Esophagus muscularis mucosa (tissue), 4 donors: ENCODE measurements at regions of chr7 and their contacts with region 1.

Region 1: DNA sequence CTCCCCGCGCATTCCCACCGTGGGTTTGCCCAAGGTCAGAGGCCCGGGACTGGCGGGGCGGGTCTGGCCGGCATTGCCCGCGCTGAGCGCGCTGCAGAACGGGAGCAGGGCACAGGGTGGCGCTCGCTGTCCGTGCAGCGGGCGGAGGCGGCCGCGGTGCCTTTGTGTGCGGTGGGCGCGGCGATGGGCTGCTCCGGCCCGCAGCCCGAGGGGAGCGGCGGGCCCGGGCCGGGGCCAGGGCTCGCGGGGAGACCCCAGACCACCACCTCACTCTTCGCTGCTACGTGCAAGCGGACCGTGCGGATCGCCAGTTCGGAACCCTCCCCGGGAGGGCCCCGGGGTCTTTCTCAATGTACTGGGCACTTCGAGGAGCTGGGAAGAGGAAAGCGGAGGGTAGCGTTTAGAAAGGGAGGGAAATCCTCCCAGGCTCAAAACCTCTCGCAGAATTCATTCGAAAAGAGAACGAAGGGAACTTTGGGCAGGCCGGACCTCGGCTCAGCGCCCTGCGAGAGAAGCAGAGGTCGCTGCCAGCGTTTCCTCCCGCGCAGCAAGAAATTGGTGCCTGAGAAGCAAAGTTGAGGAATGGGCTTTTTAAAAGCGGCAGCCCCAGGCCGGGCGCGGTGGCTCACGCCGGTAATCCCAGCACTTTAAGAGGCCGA is 8.5 kb downstream of the SP8 start:
- DNase-seq: no peak
- H3K4me3 ChIP-seq: peak overlapping the region; percentile 33 to 51 (median 40)
- H3K27ac ChIP-seq: no peak overlapping the region
- H3K4me1 ChIP-seq: peaks cover 10 to 14% (median 13%) of the 10 kb centered on the region in 4 donors
- H3K27me3 ChIP-seq: peaks cover 7 to 95% (median 74%) of the 10 kb centered on the region in 4 donors
- CTCF ChIP-seq: peak; percentile 51 to 62 (median 57)
- EP300 ChIP-seq: no peak
- POLR2A ChIP-seq: no peak

Region 2: GRCh38 chr7:20730611-20731010 is 47.6 kb before region 1 on chr7:
- intact Hi-C with region 1: no loop called
- DNase-seq: no peak
- H3K4me3 ChIP-seq: no peak overlapping the region
- H3K27ac ChIP-seq: no peak overlapping the region
- H3K4me1 ChIP-seq: no peaks in the 10 kb centered on the region
- H3K27me3 ChIP-seq: peaks cover 0 to 3% (median 0%) of the 10 kb centered on the region in 4 donors
- CTCF ChIP-seq: no peak
- EP300 ChIP-seq: no peak
- POLR2A ChIP-seq: no peak

Region 3: DNA sequence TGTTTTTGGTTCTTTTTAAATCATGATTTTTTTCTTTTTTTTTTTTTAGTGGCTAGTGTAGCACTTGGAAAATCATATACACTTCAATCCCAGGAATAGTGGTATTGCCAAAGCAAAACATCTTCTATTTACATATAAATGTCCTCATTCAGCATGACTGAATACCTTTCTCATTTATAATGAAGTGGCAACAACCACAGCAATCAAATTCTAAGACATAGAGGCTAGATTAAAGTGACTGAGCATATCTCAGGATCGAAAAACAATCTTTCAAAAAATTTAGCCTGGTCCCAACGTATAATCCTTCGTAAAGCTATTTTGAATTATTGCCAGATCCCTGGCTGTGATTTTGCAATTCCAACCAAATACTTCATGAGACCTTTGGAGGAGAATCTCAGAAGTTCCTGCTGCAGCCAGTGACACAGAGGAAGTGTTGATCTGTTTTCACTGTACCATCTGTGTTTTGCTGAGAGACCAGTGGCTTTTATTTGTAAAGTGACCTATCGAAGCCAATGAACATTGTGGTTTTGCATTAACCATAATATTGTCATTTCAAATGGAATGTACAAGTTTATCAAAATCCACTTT is 38.3 kb after region 1 on chr7:
- intact Hi-C with region 1: no loop called
- DNase-seq: no peak
- H3K4me3 ChIP-seq: no peak overlapping the region
- H3K27ac ChIP-seq: no peak overlapping the region
- H3K4me1 ChIP-seq: no peaks in the 10 kb centered on the region
- H3K27me3 ChIP-seq: no peaks in the 10 kb centered on the region
- CTCF ChIP-seq: no peak
- EP300 ChIP-seq: no peak
- POLR2A ChIP-seq: no peak

Region 4: GRCh38 chr7:21253740-21254687 is 475.8 kb after region 1 on chr7:
- intact Hi-C with region 1: loop called (anchors 5 kb)
- DNase-seq: no peak
- H3K4me3 ChIP-seq: no peak overlapping the region
- H3K27ac ChIP-seq: no peak overlapping the region
- H3K4me1 ChIP-seq: no peaks in the 10 kb centered on the region
- H3K27me3 ChIP-seq: peaks cover 0 to 72% (median 14%) of the 10 kb centered on the region in 4 donors
- CTCF ChIP-seq: peak in 2 of 3 experiments; percentile 37 to 56
- EP300 ChIP-seq: no peak
- POLR2A ChIP-seq: no peak

Region 5: DNA sequence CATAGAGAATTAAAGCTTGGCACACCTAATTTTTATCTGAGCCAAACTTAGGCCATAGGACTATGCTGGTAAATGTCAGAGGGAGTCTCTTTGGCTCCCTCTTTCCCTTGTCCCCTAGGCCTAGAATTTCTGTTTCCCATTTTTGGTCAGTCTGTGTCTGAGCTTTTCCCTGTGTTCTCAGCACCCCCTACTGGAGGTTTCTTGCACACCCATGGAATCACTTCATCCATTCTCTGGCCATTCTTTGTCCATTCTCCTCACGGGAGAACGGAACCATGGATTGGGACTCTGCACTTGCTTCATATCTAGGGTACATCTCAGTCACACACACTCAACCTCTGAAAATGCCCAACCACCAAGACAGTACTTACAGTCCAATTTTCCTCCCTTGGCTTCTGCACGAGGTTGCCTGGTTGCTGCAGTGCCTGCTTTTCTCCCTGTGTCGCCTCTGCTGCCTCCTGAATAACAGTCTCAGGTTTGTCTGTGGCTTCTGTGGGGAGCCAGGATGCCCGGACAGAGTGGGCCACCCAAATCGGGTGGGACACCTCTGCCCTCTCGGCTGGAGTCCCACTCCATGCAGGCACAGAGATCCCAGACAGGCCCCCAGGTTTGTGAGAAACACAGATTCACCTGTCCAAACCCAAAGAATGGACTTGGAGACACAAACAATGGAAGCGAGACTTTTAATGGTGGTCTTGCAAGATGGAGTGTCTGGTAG is 729.6 kb after region 1 on chr7:
- intact Hi-C with region 1: loop called (anchors 10 kb)
- DNase-seq: no peak
- H3K4me3 ChIP-seq: no peak overlapping the region
- H3K27ac ChIP-seq: no peak overlapping the region
- H3K4me1 ChIP-seq: no peaks in the 10 kb centered on the region
- H3K27me3 ChIP-seq: no peaks in the 10 kb centered on the region
- CTCF ChIP-seq: peak; percentile 68 to 81 (median 75)
- EP300 ChIP-seq: no peak
- POLR2A ChIP-seq: no peak

Region 6: DNA sequence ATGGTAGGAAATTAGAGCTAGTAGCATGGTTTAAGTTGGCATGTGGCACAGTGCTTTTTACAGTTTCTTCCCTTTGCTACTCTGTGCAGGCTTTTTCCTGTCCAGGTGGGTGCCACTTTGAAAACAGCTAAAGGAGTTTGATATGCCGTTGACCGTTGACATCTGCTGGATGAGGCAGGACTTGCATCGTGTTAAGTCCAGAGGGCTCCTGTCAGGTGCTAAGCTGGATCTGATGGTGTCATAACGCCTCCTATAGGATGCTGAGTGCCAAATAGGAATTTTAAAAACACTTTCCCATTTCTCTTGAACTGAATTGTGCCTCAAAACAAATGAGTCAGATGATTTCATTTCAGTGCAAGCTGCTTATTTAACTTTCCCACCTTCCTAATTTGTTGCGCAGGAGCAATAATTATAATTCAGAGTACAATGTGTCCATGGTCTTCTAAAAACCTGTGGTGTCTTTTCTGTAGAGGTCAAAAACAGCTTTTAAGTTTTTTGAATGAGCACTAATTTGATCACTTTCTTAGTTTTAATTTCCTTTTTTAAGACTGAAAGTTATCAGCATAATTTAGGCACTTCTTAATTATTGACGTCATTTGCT is 989.2 kb after region 1 on chr7:
- intact Hi-C with region 1: loop called (anchors 10 kb)
- DNase-seq: no peak
- H3K4me3 ChIP-seq: no peak overlapping the region
- H3K27ac ChIP-seq: no peak overlapping the region
- H3K4me1 ChIP-seq: peaks cover 0 to 17% (median 13%) of the 10 kb centered on the region in 4 donors
- H3K27me3 ChIP-seq: no peaks in the 10 kb centered on the region
- CTCF ChIP-seq: peak; percentile 24 to 60 (median 32)
- EP300 ChIP-seq: no peak
- POLR2A ChIP-seq: no peak

Region 7: GRCh38 chr7:22001345-22002004 is 1223.3 kb after region 1 on chr7:
- intact Hi-C with region 1: loop called (anchors 10 kb)
- DNase-seq: peak; percentile 12
- H3K4me3 ChIP-seq: no peak overlapping the region
- H3K27ac ChIP-seq: peak overlapping the region in 2 of 4 donors; percentile 41 to 57
- H3K4me1 ChIP-seq: peaks cover 0 to 33% (median 18%) of the 10 kb centered on the region in 4 donors
- H3K27me3 ChIP-seq: no peaks in the 10 kb centered on the region
- CTCF ChIP-seq: peak; percentile 83 to 87 (median 86)
- EP300 ChIP-seq: no peak
- POLR2A ChIP-seq: no peak